ENCODE measurements at regions of chr14 and their contacts with region 1.

Region 1: GRCh38 chr14:70600382-70601157 is at the start of gene MED6:
- DNase-seq: peak; percentile 95
- ATAC-seq: peak; percentile 100
- H3K4me3 Mint-ChIP-seq: peak within 1 kb of the TSS; percentile 100
- H3K27ac Mint-ChIP-seq: peak within 1 kb of the TSS; percentile 96
- H3K4me1 Mint-ChIP-seq: peaks cover 23% of the 10 kb centered on the region
- H3K27me3 Mint-ChIP-seq: peaks cover 4% of the 10 kb centered on the region
- total RNA-seq, gene MED6: 51.2 to 56.1 TPM

Region 2: GRCh38 chr14:70359181-70360090 is 241.1 kb before region 1 on chr14 and contains the start of gene COX16:
- CTCF ChIA-PET with region 1: no interaction called
- POLR2A ChIA-PET with region 1: no interaction called
- intact Hi-C with region 1: loop called in 1 of 2 experiments (anchors 1 kb)
- DNase-seq: peak; percentile 91
- ATAC-seq: peak; percentile 95
- H3K4me3 Mint-ChIP-seq: peak within 1 kb of the TSS; percentile 100
- H3K27ac Mint-ChIP-seq: peak within 1 kb of the TSS; percentile 90
- H3K4me1 Mint-ChIP-seq: peaks cover 37% of the 10 kb centered on the region
- H3K27me3 Mint-ChIP-seq: no peaks in the 10 kb centered on the region
- total RNA-seq, gene COX16: 56.1 to 68.9 TPM

Region 3: GRCh38 chr14:70655110-70655826 is 54.7 kb after region 1 on chr14:
- CTCF ChIA-PET with region 1: no interaction called
- POLR2A ChIA-PET with region 1: interaction called, 3 read pairs
- intact Hi-C with region 1: loop called in 1 of 2 experiments (anchors 2 kb)
- DNase-seq: peak; percentile 82
- ATAC-seq: peak; percentile 80
- H3K4me3 Mint-ChIP-seq: peak overlapping the region; percentile 76
- H3K27ac Mint-ChIP-seq: peak overlapping the region; percentile 99
- H3K4me1 Mint-ChIP-seq: peaks cover 90% of the 10 kb centered on the region
- H3K27me3 Mint-ChIP-seq: no peaks in the 10 kb centered on the region

Region 4: DNA sequence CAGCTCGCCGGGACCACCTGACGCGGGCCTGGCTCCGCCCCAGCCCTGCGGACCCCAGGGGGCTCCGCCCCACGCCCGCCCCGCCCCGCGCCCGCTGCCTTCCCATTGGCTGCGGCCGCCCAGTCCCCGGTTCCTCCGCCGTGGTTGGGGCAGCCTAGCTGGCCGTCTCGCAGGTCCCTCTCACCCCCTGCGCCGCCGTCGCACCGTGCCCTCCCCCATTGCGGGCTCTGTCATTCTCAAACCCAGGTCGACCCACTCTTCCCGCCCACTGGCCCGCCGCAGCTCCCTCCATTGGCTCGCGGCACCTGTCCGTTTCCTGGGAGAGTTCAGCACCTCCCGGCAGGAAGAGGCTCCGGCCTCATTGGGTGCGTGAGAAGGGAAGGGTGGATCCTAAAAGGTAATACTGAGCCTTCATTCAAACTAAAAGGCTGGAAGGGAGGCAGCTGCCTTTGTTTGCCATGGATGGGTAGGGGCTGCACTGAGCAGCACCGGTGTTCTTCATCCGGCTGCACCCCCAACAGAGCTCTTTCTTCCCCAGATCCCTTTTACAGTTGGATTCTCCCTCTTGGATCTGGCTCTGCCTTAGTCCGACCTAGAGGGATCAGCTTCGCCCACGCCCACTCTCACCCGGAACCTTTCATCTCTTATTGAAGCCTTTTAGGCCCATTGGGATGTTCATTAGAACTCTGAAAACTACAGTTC is 209.1 kb after region 1 on chr14:
- CTCF ChIA-PET with region 1: no interaction called
- POLR2A ChIA-PET with region 1: no interaction called
- intact Hi-C with region 1: loop called in 1 of 2 experiments (anchors 1 kb)
- DNase-seq: peak; percentile 96
- ATAC-seq: peak; percentile 87
- H3K4me3 Mint-ChIP-seq: no peak overlapping the region
- H3K27ac Mint-ChIP-seq: peak overlapping the region; percentile 20
- H3K4me1 Mint-ChIP-seq: peaks cover 4% of the 10 kb centered on the region
- H3K27me3 Mint-ChIP-seq: no peaks in the 10 kb centered on the region

Region 5: DNA sequence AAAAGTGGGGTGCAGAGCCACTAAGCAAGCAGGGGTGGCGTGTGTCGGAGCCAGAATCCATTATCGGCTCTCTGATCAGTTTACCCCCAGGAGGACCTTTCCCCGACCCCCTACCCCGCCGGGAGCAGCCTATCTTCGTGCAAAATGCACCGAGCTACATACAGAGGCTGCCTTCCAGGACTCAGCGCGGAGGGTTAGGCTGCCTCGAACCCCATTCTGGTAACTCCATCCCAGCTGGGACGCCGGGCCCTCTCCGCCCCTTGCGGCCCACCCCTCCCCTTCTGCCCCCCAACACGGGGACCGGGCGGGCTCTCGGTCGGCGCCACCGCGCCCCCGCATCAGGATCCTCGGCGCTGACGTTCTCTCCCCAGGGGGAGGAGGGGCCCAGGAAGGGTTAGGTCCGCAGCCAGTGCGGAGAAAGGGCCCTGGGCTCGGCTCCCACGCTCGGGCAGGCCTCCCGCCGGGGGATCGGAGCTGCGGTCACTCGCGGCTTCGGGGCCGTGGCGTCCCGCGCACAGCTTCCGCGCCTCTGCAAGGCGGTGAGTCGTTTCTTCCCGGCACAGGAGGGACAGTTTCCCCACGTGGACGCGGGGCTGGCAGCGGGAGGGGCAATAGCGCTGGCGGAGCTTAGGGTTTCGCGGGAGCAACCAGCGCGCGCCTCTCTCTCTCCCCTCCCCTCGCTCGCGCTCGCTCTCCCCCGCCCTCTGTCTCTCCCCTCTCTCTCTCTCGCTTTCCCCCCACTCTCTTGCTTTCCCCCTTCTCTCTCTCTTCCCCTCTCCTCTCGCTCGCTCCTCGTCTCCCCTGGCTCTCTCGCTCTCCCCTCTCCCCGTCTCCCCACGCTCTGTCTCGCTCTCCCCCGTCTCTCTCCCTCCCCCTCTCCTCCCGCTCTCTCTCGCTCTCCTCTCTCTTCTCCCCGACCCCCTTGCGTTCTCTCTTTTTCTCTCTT is 221.3 kb after region 1 on chr14:
- CTCF ChIA-PET with region 1: interaction called, 7 read pairs
- POLR2A ChIA-PET with region 1: no interaction called
- intact Hi-C with region 1: loop called (anchors 1 to 5 kb)
- DNase-seq: peak; percentile 78
- ATAC-seq: peak; percentile 43
- H3K4me3 Mint-ChIP-seq: peak overlapping the region; percentile 73
- H3K27ac Mint-ChIP-seq: peak overlapping the region; percentile 13
- H3K4me1 Mint-ChIP-seq: peaks cover 16% of the 10 kb centered on the region
- H3K27me3 Mint-ChIP-seq: peaks cover 28% of the 10 kb centered on the region

Measured in activated CD4-positive, alpha-beta T cell treated with anti-CD3 and anti-CD28 coated beads for 36 hours (primary cell).